GM12878 (cell line): ENCODE measurements at regions of chr18 and their contacts with region 1.

Region 1: GRCh38 chr18:34322365-34323289 is 97.9 kb upstream of the NOL4 start:
- DNase-seq: peak; percentile 59
- ATAC-seq: peak; percentile 74
- H3K4me3 ChIP-seq: no peak overlapping the region
- H3K27ac ChIP-seq: peak overlapping the region; percentile 61
- H3K4me1 ChIP-seq: peaks cover 6% of the 10 kb centered on the region
- H3K27me3 ChIP-seq: no peaks in the 10 kb centered on the region
- CTCF ChIP-seq: peak; percentile 67 to 73 (median 69)
- EP300 ChIP-seq: peak; percentile 86 to 91; a peak in 3 of 4 replicates
- POLR2A ChIP-seq: no peak
- RAD21 ChIP-seq: peak; percentile 90

Region 2: DNA sequence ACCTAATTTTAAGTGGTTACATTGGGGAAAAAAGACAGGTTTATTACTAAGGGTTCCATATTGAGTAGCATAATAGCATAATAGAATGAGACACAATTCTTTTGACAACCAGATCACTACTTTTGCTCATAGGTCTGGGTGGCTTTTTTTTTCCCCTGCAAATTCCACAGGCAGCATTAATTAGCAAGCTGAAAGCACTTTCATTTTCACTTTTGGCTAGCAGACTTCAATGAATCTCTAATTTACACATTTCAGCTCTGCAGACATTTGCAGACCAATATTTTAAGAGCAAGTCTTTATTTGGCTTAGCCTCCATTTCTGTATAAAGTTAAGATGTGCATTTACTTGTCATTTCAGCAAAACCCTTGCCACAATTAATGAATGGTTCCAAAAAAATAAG is 283.4 kb before region 1 on chr18:
- CTCF ChIA-PET with region 1: interaction called, 3 read pairs
- POLR2A ChIA-PET with region 1: interaction called, 3 read pairs
- RAD21 ChIA-PET with region 1: interaction called, 5 read pairs
- SMC1A ChIA-PET with region 1: interaction called, 4 read pairs
- in situ Hi-C with region 1: no loop called
- intact Hi-C with region 1: loop called (anchors 5 kb)
- DNase-seq: peak; percentile 21
- ATAC-seq: peak; percentile 66
- H3K4me3 ChIP-seq: no peak overlapping the region
- H3K27ac ChIP-seq: no peak overlapping the region
- H3K4me1 ChIP-seq: 0 out of 2 replicates have a peak, but pooled peaks cover 2% of the 10 kb centered on the region
- H3K27me3 ChIP-seq: no peaks in the 10 kb centered on the region
- CTCF ChIP-seq: no peak
- EP300 ChIP-seq: no peak
- POLR2A ChIP-seq: no peak
- RAD21 ChIP-seq: no peak

Region 3: GRCh38 chr18:34153711-34154110 is 168.9 kb before region 1 on chr18:
- CTCF ChIA-PET with region 1: interaction called, 60 read pairs
- POLR2A ChIA-PET with region 1: interaction called, 3 read pairs
- RAD21 ChIA-PET with region 1: interaction called, 12 read pairs
- SMC1A ChIA-PET with region 1: interaction called, 44 read pairs
- in situ Hi-C with region 1: no loop called
- intact Hi-C with region 1: no loop called
- DNase-seq: peak; percentile 13
- ATAC-seq: peak; percentile 85
- H3K4me3 ChIP-seq: no peak overlapping the region
- H3K27ac ChIP-seq: no peak overlapping the region
- H3K4me1 ChIP-seq: no peaks in the 10 kb centered on the region
- H3K27me3 ChIP-seq: no peaks in the 10 kb centered on the region
- CTCF ChIP-seq: no peak
- EP300 ChIP-seq: 0 out of 4 replicates have a peak, but pooled peaks of 1 of the 2 experiments have one; percentile 12
- POLR2A ChIP-seq: no peak
- RAD21 ChIP-seq: no peak

Region 4: GRCh38 chr18:34212511-34212910 is 110.1 kb before region 1 on chr18:
- CTCF ChIA-PET with region 1: interaction called, 12 read pairs
- POLR2A ChIA-PET with region 1: interaction called, 4 read pairs
- RAD21 ChIA-PET with region 1: interaction called, 10 read pairs
- SMC1A ChIA-PET with region 1: interaction called, 4 read pairs
- in situ Hi-C with region 1: no loop called
- intact Hi-C with region 1: no loop called
- DNase-seq: no peak
- ATAC-seq: peak; percentile 51
- H3K4me3 ChIP-seq: no peak overlapping the region
- H3K27ac ChIP-seq: no peak overlapping the region
- H3K4me1 ChIP-seq: no peaks in the 10 kb centered on the region
- H3K27me3 ChIP-seq: no peaks in the 10 kb centered on the region
- CTCF ChIP-seq: no peak
- EP300 ChIP-seq: no peak
- POLR2A ChIP-seq: no peak
- RAD21 ChIP-seq: no peak

Region 5: GRCh38 chr18:34281722-34282121 is 40.9 kb before region 1 on chr18:
- CTCF ChIA-PET with region 1: interaction called, 9 read pairs
- POLR2A ChIA-PET with region 1: no interaction called
- RAD21 ChIA-PET with region 1: interaction called, 4 read pairs
- SMC1A ChIA-PET with region 1: interaction called, 11 read pairs
- in situ Hi-C with region 1: no loop called
- intact Hi-C with region 1: no loop called
- DNase-seq: no peak
- ATAC-seq: peak; percentile 17; the same call in 2 of the 3 replicates
- H3K4me3 ChIP-seq: no peak overlapping the region
- H3K27ac ChIP-seq: no peak overlapping the region
- H3K4me1 ChIP-seq: no peaks in the 10 kb centered on the region
- H3K27me3 ChIP-seq: no peaks in the 10 kb centered on the region
- CTCF ChIP-seq: no peak
- EP300 ChIP-seq: no peak
- POLR2A ChIP-seq: no peak
- RAD21 ChIP-seq: no peak

Region 6: DNA sequence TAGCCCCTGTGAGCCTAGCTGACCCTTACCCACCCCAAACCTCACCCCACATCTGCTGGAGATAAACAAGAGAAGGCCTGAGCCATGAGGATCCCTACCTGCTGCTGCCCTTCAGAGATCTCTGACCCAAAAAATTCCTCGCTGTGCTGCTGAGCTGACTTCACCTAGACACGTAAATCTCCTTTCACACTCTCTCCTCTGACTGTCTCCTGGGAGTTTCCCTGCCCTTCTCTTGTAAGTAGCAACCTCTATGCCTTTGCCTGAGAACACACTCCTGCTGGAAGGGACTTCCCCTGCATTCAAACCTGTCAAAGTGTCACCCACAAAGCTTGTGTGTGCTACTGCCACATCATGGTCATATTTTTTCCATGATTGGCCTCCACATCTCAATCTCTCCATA is 36.3 kb after region 1 on chr18:
- CTCF ChIA-PET with region 1: interaction called, 40 read pairs
- POLR2A ChIA-PET with region 1: interaction called, 19 read pairs
- RAD21 ChIA-PET with region 1: interaction called, 69 read pairs
- SMC1A ChIA-PET with region 1: interaction called, 95 read pairs
- in situ Hi-C with region 1: no loop called
- intact Hi-C with region 1: loop called (anchors 2 kb)
- DNase-seq: peak; percentile 72
- ATAC-seq: peak; percentile 88
- H3K4me3 ChIP-seq: no peak overlapping the region
- H3K27ac ChIP-seq: no peak overlapping the region; the same call in 1 of the 2 replicates
- H3K4me1 ChIP-seq: no peaks in the 10 kb centered on the region; the same call in 1 of the 2 replicates
- H3K27me3 ChIP-seq: no peaks in the 10 kb centered on the region
- CTCF ChIP-seq: peak in 1 of 3 experiments; percentile 39; a peak in 2 of 6 replicates
- EP300 ChIP-seq: peak in 1 of 2 experiments; percentile 72; a peak in 2 of 4 replicates
- POLR2A ChIP-seq: no peak
- RAD21 ChIP-seq: peak; percentile 43; the same call in 1 of the 2 replicates

Region 7: GRCh38 chr18:34431042-34431441 is 108.4 kb after region 1 on chr18:
- CTCF ChIA-PET with region 1: no interaction called
- POLR2A ChIA-PET with region 1: no interaction called
- RAD21 ChIA-PET with region 1: no interaction called
- SMC1A ChIA-PET with region 1: no interaction called
- in situ Hi-C with region 1: no loop called
- intact Hi-C with region 1: no loop called
- DNase-seq: no peak
- ATAC-seq: no peak
- H3K4me3 ChIP-seq: no peak overlapping the region
- H3K27ac ChIP-seq: no peak overlapping the region
- H3K4me1 ChIP-seq: no peaks in the 10 kb centered on the region
- H3K27me3 ChIP-seq: no peaks in the 10 kb centered on the region
- CTCF ChIP-seq: no peak
- EP300 ChIP-seq: no peak
- POLR2A ChIP-seq: no peak
- RAD21 ChIP-seq: no peak

Region 8: GRCh38 chr18:34661464-34662111 is 339.0 kb after region 1 on chr18:
- CTCF ChIA-PET with region 1: interaction called, 13 read pairs
- POLR2A ChIA-PET with region 1: no interaction called
- RAD21 ChIA-PET with region 1: interaction called, 12 read pairs
- SMC1A ChIA-PET with region 1: interaction called, 4 read pairs
- in situ Hi-C with region 1: no loop called
- intact Hi-C with region 1: no loop called
- DNase-seq: no peak
- ATAC-seq: peak; percentile 90
- H3K4me3 ChIP-seq: no peak overlapping the region
- H3K27ac ChIP-seq: no peak overlapping the region
- H3K4me1 ChIP-seq: no peaks in the 10 kb centered on the region
- H3K27me3 ChIP-seq: no peaks in the 10 kb centered on the region; a peak in 1 of 4 replicates
- CTCF ChIP-seq: peak; percentile 69 to 76 (median 75)
- EP300 ChIP-seq: no peak
- POLR2A ChIP-seq: no peak
- RAD21 ChIP-seq: peak; percentile 56